ENCODE measurements at regions of chr6 and their contacts with region 1.

Region 1: GRCh38 chr6:144296973-144297372 is 11.8 kb downstream of the UTRN start:
- DNase-seq: peak; percentile 81
- H3K4me3 ChIP-seq: no peak overlapping the region
- H3K27ac ChIP-seq: peak overlapping the region; percentile 47 to 64
- H3K4me1 ChIP-seq: no peaks in the 10 kb centered on the region
- H3K27me3 ChIP-seq: no peaks in the 10 kb centered on the region
- CTCF ChIP-seq: no peak
- POLR2A ChIP-seq: no peak

Region 2: DNA sequence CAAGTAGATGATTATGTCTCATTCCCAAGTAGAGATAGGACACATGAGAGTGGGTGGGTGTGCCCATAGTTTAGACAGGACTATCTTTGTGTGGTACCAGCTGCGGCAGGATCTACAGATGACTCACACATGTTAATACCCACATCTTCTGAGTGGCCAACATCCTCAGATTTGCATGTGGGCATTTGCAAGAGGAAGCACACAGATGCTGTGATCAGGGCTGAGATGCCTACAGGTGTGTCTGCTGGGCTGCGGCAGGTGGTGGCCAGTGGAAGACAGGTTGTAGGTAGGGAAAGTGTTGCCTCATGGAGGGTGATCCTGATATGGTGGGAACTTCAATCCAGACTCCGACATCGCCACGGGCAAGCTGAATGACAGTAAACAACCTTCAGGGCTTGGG is 39.0 kb after region 1 on chr6:
- intact Hi-C with region 1: loop called (anchors 5 kb)
- DNase-seq: no peak
- H3K4me3 ChIP-seq: no peak overlapping the region
- H3K27ac ChIP-seq: no peak overlapping the region
- H3K4me1 ChIP-seq: no peaks in the 10 kb centered on the region
- H3K27me3 ChIP-seq: no peaks in the 10 kb centered on the region
- CTCF ChIP-seq: no peak
- POLR2A ChIP-seq: no peak

Region 3: GRCh38 chr6:145445674-145446073 is 1148.7 kb after region 1 on chr6:
- intact Hi-C with region 1: no loop called
- DNase-seq: no peak
- H3K4me3 ChIP-seq: no peak overlapping the region
- H3K27ac ChIP-seq: no peak overlapping the region
- H3K4me1 ChIP-seq: no peaks in the 10 kb centered on the region
- H3K27me3 ChIP-seq: no peaks in the 10 kb centered on the region
- CTCF ChIP-seq: no peak
- POLR2A ChIP-seq: no peak

Measured in prostate gland (tissue), 2 donors.